ENCODE measurements at regions of chr2 and their contacts with region 1.

Region 1: DNA sequence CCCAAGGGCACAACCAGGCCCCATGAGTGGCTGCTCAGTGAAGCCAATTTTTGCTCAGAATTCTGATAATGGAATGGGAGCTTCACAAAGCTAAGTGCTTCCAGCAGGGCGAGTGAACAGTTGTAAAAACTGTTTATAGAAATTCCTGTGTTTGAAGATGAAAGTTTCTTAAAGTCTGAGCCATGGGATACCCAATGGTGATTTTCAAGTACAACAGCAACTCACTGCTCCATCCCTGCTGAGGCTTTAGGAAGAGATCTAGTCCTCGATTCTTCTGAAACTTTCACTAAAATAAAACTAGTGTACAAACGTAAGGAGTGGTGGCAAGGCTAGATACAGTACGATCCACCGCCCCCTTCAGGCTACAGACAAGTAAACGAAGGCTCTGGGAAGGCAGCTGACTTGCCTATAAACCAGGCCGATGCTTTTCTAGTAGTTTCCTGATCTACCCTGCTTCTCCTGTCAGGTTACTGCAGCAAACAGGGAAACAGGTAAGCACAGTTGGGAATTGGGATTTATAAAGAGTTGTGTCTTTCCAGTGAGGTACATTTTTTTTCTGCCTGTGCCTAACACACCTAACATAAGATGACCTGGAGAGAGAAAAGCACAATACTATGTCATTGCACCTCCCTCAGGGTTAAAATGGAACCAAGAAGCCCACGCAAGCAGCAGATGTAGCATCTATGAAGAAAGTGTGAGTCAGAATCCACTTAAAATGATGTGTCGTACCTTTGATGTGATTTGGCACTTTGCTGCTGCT is 108.7 kb downstream of the UXS1 start:
- DNase-seq: peak; percentile 78
- H3K4me3 Mint-ChIP-seq: peak overlapping the region; percentile 68
- H3K27ac Mint-ChIP-seq: peak overlapping the region; percentile 89
- H3K4me1 Mint-ChIP-seq: peaks cover 64% of the 10 kb centered on the region
- H3K27me3 Mint-ChIP-seq: no peaks in the 10 kb centered on the region

Region 2: DNA sequence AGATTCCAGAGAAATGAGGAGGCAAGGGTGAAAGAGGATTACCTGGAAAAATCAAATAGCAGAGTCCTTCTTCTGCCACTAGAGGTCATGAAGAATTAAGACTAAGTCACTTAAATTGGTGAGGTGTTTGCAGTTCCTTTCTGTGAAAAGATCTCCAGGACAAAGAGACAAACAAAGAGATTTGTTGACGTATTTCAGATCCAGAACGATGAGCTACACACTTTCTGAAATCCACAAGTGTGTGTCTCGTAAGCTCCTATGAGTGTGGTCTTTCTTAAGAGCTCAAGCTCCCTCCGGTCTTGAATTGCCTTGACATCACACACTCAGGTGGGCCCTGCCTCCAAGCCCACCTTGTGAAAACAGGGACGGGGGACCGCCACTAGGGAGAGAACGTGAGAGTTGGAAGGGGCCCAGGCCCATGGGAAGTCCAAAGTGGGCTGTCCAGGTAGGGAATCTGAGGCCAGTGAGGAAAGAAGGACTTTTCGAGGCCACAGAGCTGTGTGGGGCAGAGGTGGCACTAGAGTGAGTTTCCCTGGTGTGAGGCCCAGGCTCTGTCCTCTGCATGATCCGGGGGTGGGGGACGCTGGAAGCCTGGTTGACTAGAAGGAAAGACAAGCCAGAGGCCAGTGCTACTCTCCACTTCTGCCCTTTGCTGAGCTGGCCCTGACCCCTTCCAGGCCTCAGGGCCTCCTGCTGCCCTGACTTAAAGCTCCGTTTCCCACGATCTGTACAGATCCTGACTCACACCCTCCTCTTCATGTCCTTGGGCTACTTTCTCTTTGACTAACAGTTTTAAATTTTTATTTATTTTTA is 508.7 kb before region 1 on chr2:
- CTCF ChIA-PET with region 1: interaction called, 11 read pairs
- POLR2A ChIA-PET with region 1: no interaction called
- intact Hi-C with region 1: loop called (anchors 1 kb)
- DNase-seq: peak; percentile 20
- H3K4me3 Mint-ChIP-seq: no peak overlapping the region
- H3K27ac Mint-ChIP-seq: peak overlapping the region; percentile 75
- H3K4me1 Mint-ChIP-seq: peaks cover 18% of the 10 kb centered on the region
- H3K27me3 Mint-ChIP-seq: no peaks in the 10 kb centered on the region

Region 3: DNA sequence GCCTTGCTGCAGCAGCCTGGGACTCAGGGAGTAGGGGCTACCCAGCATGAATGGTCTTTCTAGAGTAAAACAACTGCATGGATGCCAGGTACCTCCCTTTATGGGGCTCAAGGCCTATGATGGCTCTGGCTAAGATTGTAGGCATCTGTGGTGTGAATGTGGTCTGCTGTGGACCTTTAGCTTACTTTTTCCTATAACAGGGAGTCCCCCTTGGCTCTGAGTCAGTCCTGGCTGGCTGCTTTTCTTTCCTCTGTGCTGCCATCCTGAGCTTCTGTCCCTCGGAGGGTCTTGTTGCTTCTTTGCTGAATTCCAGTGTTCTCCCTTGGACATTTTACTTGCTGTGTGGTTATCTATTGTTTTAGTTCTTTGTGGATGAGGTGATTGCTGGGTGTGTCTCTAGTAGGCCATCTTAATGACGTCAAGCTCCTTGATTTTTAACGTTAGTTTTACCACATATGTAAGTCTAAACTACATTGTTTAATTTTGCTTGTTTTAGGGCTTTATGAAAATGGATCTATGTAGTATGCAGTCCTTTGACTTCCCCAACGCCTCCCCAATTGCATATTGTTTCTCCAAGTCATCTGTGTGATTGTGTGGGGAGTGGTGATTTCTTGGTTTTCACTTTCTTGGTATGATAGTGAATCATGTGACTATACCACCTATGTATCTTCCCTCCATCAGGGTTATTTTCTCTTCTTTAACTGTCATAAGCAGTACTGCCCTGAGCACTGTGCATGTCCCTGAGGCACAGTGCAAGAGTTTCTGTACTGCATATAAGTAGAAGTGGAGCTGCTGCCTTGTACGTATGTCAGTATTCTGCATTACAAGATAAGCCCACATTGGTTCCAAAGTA is 248.3 kb before region 1 on chr2:
- CTCF ChIA-PET with region 1: no interaction called
- POLR2A ChIA-PET with region 1: no interaction called
- intact Hi-C with region 1: loop called (anchors 2 kb)
- DNase-seq: peak; percentile 74
- H3K4me3 Mint-ChIP-seq: peak overlapping the region; percentile 37
- H3K27ac Mint-ChIP-seq: peak overlapping the region; percentile 81
- H3K4me1 Mint-ChIP-seq: peaks cover 83% of the 10 kb centered on the region
- H3K27me3 Mint-ChIP-seq: no peaks in the 10 kb centered on the region

Region 4: GRCh38 chr2:105919826-105920225 is 165.5 kb before region 1 on chr2:
- CTCF ChIA-PET with region 1: interaction called, 7 read pairs
- POLR2A ChIA-PET with region 1: no interaction called
- intact Hi-C with region 1: loop called (anchors 1 kb)
- DNase-seq: peak; percentile 77
- H3K4me3 Mint-ChIP-seq: no peak overlapping the region
- H3K27ac Mint-ChIP-seq: no peak overlapping the region
- H3K4me1 Mint-ChIP-seq: peaks cover 16% of the 10 kb centered on the region
- H3K27me3 Mint-ChIP-seq: no peaks in the 10 kb centered on the region

Region 5: GRCh38 chr2:106057206-106057963 is 28.0 kb before region 1 on chr2:
- CTCF ChIA-PET with region 1: interaction called, 3 read pairs
- POLR2A ChIA-PET with region 1: no interaction called
- intact Hi-C with region 1: loop called (anchors 1 kb)
- DNase-seq: peak; percentile 68
- H3K4me3 Mint-ChIP-seq: no peak overlapping the region
- H3K27ac Mint-ChIP-seq: peak overlapping the region; percentile 34
- H3K4me1 Mint-ChIP-seq: peaks cover 68% of the 10 kb centered on the region
- H3K27me3 Mint-ChIP-seq: no peaks in the 10 kb centered on the region

Region 6: DNA sequence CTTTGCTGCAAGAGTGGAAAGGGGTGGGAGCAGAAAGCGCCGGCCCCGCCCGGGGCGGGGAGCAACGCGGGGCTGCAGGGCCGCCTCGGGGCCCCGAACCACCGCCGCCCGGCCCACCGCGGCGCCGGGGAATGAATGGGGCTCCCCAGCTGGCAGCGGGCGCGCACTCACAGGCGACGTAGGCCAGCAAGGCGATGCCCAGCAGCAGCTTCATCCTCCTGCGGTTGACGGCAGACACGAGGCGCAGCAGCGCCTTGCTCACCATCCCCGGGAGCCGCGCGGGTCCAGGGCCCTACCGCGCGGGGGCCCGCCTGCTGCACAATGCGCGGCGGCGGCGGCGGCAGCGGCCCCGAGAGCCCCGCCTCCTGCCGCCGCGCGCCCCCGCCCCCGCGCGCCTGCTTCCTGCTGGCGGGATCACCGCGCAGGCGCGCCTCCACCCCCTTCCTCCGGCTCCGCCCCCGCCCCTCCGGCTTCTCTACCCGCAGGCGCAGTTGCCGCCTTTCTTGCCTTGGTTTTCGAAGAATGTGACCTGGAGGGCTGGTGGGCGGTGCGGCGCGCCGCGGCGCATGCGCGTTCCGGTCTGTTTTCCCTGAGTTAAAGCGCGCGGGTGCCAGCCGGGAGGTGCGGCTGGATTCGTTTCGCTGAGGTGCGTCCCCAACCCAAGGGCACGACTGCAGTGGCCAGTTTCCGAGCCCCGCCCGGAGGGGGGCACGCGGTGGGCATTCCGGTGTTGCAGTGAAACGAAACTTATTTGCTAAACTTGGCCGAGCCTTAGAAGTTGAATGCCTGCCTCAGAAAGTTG is 108.8 kb after region 1 on chr2 and contains the start of gene UXS1:
- CTCF ChIA-PET with region 1: no interaction called
- POLR2A ChIA-PET with region 1: no interaction called
- intact Hi-C with region 1: no loop called
- DNase-seq: peak; percentile 99
- H3K4me3 Mint-ChIP-seq: peak within 1 kb of the TSS; percentile 84
- H3K27ac Mint-ChIP-seq: peak within 1 kb of the TSS; percentile 87
- H3K4me1 Mint-ChIP-seq: peaks cover 40% of the 10 kb centered on the region
- H3K27me3 Mint-ChIP-seq: peaks cover 2% of the 10 kb centered on the region
- total RNA-seq, gene UXS1: 39.2 to 41.5 TPM

Region 7: DNA sequence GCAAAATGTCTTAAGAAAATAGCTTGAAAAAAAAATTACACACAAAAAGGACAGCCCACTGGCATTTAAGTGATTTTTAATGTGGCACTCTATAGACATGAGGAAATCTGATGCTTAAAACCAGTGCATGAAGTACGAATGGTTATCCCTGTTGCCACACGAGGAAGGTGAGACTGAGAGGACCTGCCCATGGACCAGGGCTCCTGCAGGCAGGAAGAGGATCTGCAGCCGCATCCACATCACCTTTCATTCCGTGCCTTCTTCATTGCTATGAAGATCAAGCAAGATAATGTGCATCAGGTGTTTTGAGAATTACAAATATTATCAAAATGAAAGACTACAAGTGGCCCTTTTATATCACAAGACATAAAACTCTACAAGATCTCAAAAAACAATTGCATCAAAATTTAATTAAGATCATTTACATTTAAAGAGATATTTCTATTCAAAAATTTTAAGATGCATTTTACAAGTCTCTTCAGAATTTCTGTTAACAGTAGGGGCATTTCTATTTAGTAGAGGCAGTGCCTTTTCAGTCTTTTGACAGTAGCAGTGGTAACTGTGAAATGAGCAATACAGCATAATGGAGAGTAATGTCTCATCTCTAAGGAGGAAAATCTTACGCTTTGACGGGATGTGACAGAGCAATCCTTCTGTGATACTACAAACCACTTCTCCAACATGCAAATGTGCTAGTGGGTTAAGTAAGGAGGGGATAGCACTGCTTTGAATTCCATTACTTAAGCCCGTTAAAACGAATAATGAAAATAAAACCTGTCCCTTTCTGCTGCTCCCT is 1984.4 kb after region 1 on chr2:
- CTCF ChIA-PET with region 1: no interaction called
- POLR2A ChIA-PET with region 1: no interaction called
- intact Hi-C with region 1: no loop called
- DNase-seq: no peak
- H3K4me3 Mint-ChIP-seq: no peak overlapping the region
- H3K27ac Mint-ChIP-seq: no peak overlapping the region
- H3K4me1 Mint-ChIP-seq: no peaks in the 10 kb centered on the region
- H3K27me3 Mint-ChIP-seq: no peaks in the 10 kb centered on the region

Measured in activated CD4-positive, alpha-beta memory T cell treated with anti-CD3 and anti-CD28 coated beads for 36 hours (primary cell).